Caco-2 (cell line): ENCODE measurements at regions of chr12 and their contacts with region 1.

Region 1: DNA sequence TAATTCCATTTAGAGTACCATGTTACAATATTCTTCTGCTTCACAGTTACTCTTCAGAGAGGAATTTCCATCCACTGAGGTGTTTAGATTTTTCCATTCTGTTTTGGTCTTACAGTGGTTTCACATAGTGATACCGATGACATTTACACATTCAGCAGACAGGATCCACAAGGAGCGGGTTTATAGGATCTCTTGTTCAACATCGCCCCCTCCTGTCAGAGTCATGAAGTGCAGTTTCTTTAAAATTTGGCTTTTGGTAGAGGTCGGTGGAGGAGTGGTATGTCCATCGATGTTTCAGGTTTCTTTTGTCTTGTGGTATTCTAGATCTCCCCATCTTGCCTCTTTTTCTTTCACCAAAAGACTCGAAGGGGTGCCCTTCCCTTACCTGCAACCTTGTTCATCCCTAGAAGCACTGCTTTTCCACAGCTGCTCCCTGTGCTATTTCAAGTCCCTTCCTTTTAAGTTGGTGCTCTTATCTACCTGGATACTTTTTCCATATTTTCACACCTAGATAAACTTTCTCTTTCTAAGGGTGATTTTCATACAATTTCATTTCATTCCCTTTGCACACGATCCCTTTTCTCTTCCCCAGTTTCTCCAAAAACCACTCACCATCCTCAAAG is 181.3 kb downstream of the ITPR2 start:
- DNase-seq: peak; percentile 65 to 88
- H3K4me3 ChIP-seq: no peak overlapping the region
- H3K4me3 Mint-ChIP-seq: no peak overlapping the region
- H3K27ac Mint-ChIP-seq: no peak overlapping the region
- H3K4me1 ChIP-seq: peaks cover 23% of the 10 kb centered on the region
- H3K4me1 Mint-ChIP-seq: peaks cover 32% of the 10 kb centered on the region
- H3K27me3 ChIP-seq: no peaks in the 10 kb centered on the region
- H3K27me3 Mint-ChIP-seq: no peaks in the 10 kb centered on the region
- CTCF ChIP-seq: peak; percentile 88 to 99

Region 2: DNA sequence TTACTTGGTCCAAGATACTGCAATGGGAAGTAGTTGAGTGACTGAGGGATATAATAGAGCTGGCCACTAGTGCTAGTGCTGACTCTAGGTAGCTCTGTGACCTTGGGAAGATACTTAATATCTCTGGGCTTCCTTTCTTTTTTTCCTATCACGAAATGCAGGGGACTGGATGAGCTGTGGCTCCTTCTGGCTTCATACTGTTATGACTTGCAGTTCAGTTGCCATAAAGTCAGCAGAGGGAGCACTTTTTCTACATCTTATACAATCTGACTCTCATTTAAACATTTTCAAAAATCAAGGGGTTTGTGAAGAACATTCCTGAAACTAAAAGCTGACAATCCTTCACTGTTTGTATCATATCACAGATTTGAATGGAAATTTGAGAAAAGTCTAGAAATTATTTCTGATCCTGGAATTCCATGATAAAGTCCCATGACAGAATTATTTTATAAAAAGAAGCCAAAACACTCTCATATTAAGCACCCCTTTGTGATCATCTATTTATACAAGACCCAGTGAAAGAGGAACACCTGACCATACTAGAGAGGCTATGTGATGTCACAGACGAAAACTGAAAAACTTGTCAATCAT is 532.2 kb before region 1 on chr12:
- CTCF ChIA-PET with region 1: interaction called, 7 read pairs
- POLR2A ChIA-PET with region 1: no interaction called
- intact Hi-C with region 1: loop called (anchors 1 kb)
- DNase-seq: peak in 1 of 2 experiments; percentile 55
- H3K4me3 ChIP-seq: no peak overlapping the region
- H3K4me3 Mint-ChIP-seq: no peak overlapping the region
- H3K27ac Mint-ChIP-seq: no peak overlapping the region
- H3K4me1 ChIP-seq: peaks cover 25% of the 10 kb centered on the region
- H3K4me1 Mint-ChIP-seq: peaks cover 16% of the 10 kb centered on the region
- H3K27me3 ChIP-seq: peaks cover 11% of the 10 kb centered on the region
- H3K27me3 Mint-ChIP-seq: peaks cover 19% of the 10 kb centered on the region
- CTCF ChIP-seq: peak; percentile 65 to 73

Region 3: DNA sequence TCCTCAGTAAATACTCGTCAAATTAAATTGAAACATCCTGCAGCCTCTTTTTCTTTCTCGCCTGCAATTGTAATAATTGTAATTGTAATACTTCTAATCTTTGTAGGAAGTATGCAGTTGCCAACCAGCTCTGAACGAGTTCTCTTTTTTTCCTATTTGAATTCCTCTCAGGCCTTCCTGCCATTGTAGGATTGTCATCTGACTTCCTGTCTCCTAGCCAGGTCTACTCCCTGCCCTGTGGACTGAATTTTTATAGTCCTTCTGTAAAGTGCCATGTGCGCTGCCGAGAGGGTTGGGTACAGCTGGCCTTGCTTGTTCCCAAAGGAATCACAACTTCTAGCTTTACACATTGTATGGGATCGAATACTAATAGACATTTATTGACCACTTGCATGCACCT is 273.0 kb before region 1 on chr12:
- CTCF ChIA-PET with region 1: no interaction called
- POLR2A ChIA-PET with region 1: no interaction called
- intact Hi-C with region 1: loop called (anchors 5 kb)
- DNase-seq: no peak
- H3K4me3 ChIP-seq: no peak overlapping the region
- H3K4me3 Mint-ChIP-seq: no peak overlapping the region
- H3K27ac Mint-ChIP-seq: no peak overlapping the region
- H3K4me1 ChIP-seq: no peaks in the 10 kb centered on the region
- H3K4me1 Mint-ChIP-seq: no peaks in the 10 kb centered on the region
- H3K27me3 ChIP-seq: no peaks in the 10 kb centered on the region
- H3K27me3 Mint-ChIP-seq: no peaks in the 10 kb centered on the region
- CTCF ChIP-seq: no peak

Region 4: GRCh38 chr12:26514364-26514763 is 137.3 kb before region 1 on chr12:
- CTCF ChIA-PET with region 1: no interaction called
- POLR2A ChIA-PET with region 1: no interaction called
- intact Hi-C with region 1: loop called (anchors 1 kb)
- DNase-seq: no peak
- H3K4me3 ChIP-seq: no peak overlapping the region
- H3K4me3 Mint-ChIP-seq: no peak overlapping the region
- H3K27ac Mint-ChIP-seq: peak overlapping the region; percentile 96
- H3K4me1 ChIP-seq: peaks cover 51% of the 10 kb centered on the region
- H3K4me1 Mint-ChIP-seq: peaks cover 44% of the 10 kb centered on the region
- H3K27me3 ChIP-seq: no peaks in the 10 kb centered on the region
- H3K27me3 Mint-ChIP-seq: no peaks in the 10 kb centered on the region
- CTCF ChIP-seq: no peak

Region 5: DNA sequence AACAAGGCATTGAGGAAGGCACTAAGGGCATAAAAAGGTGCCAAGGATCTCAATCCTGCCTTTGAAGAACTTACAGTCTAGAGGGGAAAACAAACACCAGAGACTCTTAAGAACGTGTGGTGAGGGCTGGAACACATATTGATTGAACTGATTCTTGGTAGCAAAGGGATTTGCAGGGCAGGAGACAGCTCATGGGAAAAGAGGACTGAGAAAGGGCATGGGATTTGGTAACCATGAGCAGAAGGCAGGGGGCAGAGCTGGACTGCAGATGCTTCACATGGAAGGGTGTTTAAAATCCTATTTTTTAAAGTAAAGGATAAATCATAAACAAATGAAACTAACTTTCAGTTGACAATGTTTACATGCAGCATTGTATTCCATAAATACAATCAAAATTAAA is 21.8 kb before region 1 on chr12:
- CTCF ChIA-PET with region 1: interaction called, 3 read pairs
- POLR2A ChIA-PET with region 1: no interaction called
- intact Hi-C with region 1: loop called (anchors 1 kb)
- DNase-seq: no peak
- H3K4me3 ChIP-seq: no peak overlapping the region
- H3K4me3 Mint-ChIP-seq: peak overlapping the region; percentile 14
- H3K27ac Mint-ChIP-seq: peak overlapping the region; percentile 51
- H3K4me1 ChIP-seq: peaks cover 57% of the 10 kb centered on the region
- H3K4me1 Mint-ChIP-seq: peaks cover 55% of the 10 kb centered on the region
- H3K27me3 ChIP-seq: no peaks in the 10 kb centered on the region
- H3K27me3 Mint-ChIP-seq: no peaks in the 10 kb centered on the region
- CTCF ChIP-seq: peak in 1 of 2 experiments; percentile 11